CD4-positive, alpha-beta T cell (primary cell): ENCODE measurements at regions of chr2 and their contacts with region 1.

Region 1: GRCh38 chr2:160918906-160919503 is 241.2 kb upstream of the TANK start:
- DNase-seq: peak in 13 of 14 experiments; percentile 1 to 60 (median 21)
- ATAC-seq: no peak
- H3K4me3 ChIP-seq: no peak overlapping the region
- H3K4me3 Mint-ChIP-seq: no peak overlapping the region
- H3K27ac ChIP-seq: no peak overlapping the region
- H3K27ac Mint-ChIP-seq: no peak overlapping the region
- H3K4me1 ChIP-seq: no peaks in the 10 kb centered on the region
- H3K4me1 Mint-ChIP-seq: no peaks in the 10 kb centered on the region
- H3K27me3 ChIP-seq: no peaks in the 10 kb centered on the region
- H3K27me3 Mint-ChIP-seq: no peaks in the 10 kb centered on the region
- CTCF ChIP-seq: peak; percentile 37

Region 2: DNA sequence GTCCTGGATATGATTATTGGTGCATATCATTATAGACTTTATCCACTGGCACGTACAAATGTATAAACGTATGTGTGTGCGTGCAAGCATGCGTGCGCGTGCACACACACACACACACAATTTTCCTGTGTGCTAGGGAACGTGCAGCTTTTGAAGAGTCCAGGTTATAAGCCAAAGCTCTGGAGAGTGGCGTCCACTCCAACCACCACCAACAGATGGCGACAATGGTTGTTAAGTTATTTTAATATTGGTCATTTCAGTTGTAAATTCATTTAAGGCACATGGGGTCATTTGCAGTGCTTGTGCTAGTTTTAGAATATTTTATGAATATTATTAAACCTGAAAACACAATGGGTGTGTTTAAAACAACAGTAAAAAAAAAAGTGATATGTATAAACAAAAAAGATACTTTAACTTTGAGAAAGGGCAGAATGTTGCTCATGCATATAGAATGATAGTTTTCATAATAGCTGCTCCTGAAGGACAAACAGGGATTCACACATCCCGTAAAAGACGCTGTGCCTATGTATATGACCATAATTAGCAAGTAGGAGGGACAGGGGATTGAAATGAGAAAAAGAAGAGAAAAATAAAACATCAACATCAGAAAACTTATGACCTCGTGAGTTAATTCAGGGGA is 594.7 kb before region 1 on chr2:
- CTCF ChIA-PET with region 1: no interaction called
- POLR2A ChIA-PET with region 1: no interaction called
- intact Hi-C with region 1: loop called in 1 of 2 experiments (anchors 10 kb)
- DNase-seq: peak; percentile 12 to 66 (median 29)
- ATAC-seq: no peak
- H3K4me3 ChIP-seq: no peak overlapping the region
- H3K4me3 Mint-ChIP-seq: peak overlapping the region; percentile 12
- H3K27ac ChIP-seq: no peak overlapping the region
- H3K27ac Mint-ChIP-seq: peak overlapping the region; percentile 14
- H3K4me1 ChIP-seq: peaks cover 37% of the 10 kb centered on the region
- H3K4me1 Mint-ChIP-seq: peaks cover 93% of the 10 kb centered on the region
- H3K27me3 ChIP-seq: no peaks in the 10 kb centered on the region
- H3K27me3 Mint-ChIP-seq: no peaks in the 10 kb centered on the region
- CTCF ChIP-seq: peak; percentile 76

Region 3: GRCh38 chr2:160353166-160353565 is 565.8 kb before region 1 on chr2:
- CTCF ChIA-PET with region 1: no interaction called
- POLR2A ChIA-PET with region 1: no interaction called
- intact Hi-C with region 1: loop called in 1 of 2 experiments (anchors 2 kb)
- DNase-seq: peak in 10 of 14 experiments; percentile 11 to 67 (median 18)
- ATAC-seq: peak; percentile 90
- H3K4me3 ChIP-seq: no peak overlapping the region
- H3K4me3 Mint-ChIP-seq: peak overlapping the region; percentile 22
- H3K27ac ChIP-seq: no peak overlapping the region
- H3K27ac Mint-ChIP-seq: peak overlapping the region; percentile 46
- H3K4me1 ChIP-seq: no peaks in the 10 kb centered on the region
- H3K4me1 Mint-ChIP-seq: peaks cover 87% of the 10 kb centered on the region
- H3K27me3 ChIP-seq: no peaks in the 10 kb centered on the region
- H3K27me3 Mint-ChIP-seq: no peaks in the 10 kb centered on the region
- CTCF ChIP-seq: peak; percentile 60

Region 4: GRCh38 chr2:160940699-160941098 is 21.7 kb after region 1 on chr2:
- CTCF ChIA-PET with region 1: no interaction called
- POLR2A ChIA-PET with region 1: no interaction called
- intact Hi-C with region 1: no loop called
- DNase-seq: peak in 5 of 14 experiments; percentile 0 to 53 (median 20)
- ATAC-seq: peak; percentile 54
- H3K4me3 ChIP-seq: no peak overlapping the region
- H3K4me3 Mint-ChIP-seq: no peak overlapping the region
- H3K27ac ChIP-seq: no peak overlapping the region
- H3K27ac Mint-ChIP-seq: peak overlapping the region; percentile 29
- H3K4me1 ChIP-seq: peaks cover 4% of the 10 kb centered on the region
- H3K4me1 Mint-ChIP-seq: peaks cover 23% of the 10 kb centered on the region
- H3K27me3 ChIP-seq: no peaks in the 10 kb centered on the region
- H3K27me3 Mint-ChIP-seq: no peaks in the 10 kb centered on the region
- CTCF ChIP-seq: no peak

Region 5: DNA sequence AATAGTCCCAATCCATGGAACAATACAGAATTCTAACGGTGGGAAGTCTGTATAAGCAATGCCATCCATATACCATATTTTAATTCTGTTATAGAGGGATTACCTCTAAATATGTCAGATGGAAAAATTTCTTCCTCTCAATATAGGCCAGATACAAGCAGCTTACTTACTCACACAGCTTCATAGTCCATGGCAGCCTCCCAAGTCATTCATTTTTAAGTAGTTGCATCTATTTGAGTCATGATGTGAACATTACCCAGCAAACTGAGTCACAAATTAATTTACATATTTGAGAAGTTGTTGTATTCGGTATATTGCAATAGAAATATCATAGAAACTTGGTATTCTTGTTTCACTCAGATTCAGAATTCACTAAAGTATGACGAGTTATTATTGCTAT is 517.4 kb after region 1 on chr2:
- CTCF ChIA-PET with region 1: no interaction called
- POLR2A ChIA-PET with region 1: no interaction called
- intact Hi-C with region 1: no loop called
- DNase-seq: no peak
- ATAC-seq: no peak
- H3K4me3 ChIP-seq: no peak overlapping the region
- H3K4me3 Mint-ChIP-seq: no peak overlapping the region
- H3K27ac ChIP-seq: no peak overlapping the region
- H3K27ac Mint-ChIP-seq: no peak overlapping the region
- H3K4me1 ChIP-seq: no peaks in the 10 kb centered on the region
- H3K4me1 Mint-ChIP-seq: no peaks in the 10 kb centered on the region
- H3K27me3 ChIP-seq: peaks cover 0 to 46% of the 10 kb centered on the region in 2 experiments
- H3K27me3 Mint-ChIP-seq: peaks cover 72% of the 10 kb centered on the region
- CTCF ChIP-seq: no peak